CD8-positive, alpha-beta T cell (primary cell): ENCODE measurements at regions of chr15 and their contacts with region 1.

Region 1: GRCh38 chr15:38354315-38354929 is 99.5 kb upstream of the FAM98B start:
- DNase-seq: peak; percentile 15 to 73 (median 51)
- ATAC-seq: no peak
- H3K4me3 ChIP-seq: no peak overlapping the region
- H3K4me3 Mint-ChIP-seq: no peak overlapping the region
- H3K27ac ChIP-seq: no peak overlapping the region
- H3K27ac Mint-ChIP-seq: no peak overlapping the region
- H3K4me1 ChIP-seq: no peaks in the 10 kb centered on the region
- H3K4me1 Mint-ChIP-seq: no peaks in the 10 kb centered on the region
- H3K27me3 ChIP-seq: no peaks in the 10 kb centered on the region
- H3K27me3 Mint-ChIP-seq: peaks cover 5% of the 10 kb centered on the region
- CTCF ChIP-seq: peak; percentile 63

Region 2: DNA sequence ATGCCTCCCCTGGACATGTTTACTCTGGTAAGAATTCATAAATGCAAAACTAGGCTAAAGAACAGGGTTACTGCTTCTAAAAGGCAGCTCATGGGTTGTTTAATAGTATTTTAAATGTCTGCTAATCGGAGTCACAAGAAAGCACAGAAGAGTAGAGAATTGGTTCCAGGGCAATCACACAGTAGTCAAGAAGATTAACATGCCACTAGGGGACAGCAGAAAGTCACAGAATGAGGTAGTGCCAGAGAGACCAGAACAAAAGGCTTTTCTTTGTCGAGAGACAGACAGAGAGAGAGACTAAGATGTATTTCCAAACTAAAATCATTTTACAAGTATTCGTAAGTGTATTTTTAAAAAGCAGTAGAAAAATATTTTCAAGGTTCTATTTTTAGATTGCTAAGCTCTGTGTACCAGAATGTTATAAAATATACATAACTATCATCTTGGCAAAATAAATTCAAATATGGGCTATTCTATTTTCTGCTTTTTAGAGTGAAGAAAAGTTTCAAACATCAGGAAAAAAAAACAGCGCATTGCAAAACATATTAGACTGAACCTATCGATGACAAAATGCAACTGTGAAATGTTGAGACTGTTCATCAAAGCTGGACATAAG is 1853.3 kb before region 1 on chr15:
- CTCF ChIA-PET with region 1: interaction called, 3 read pairs
- POLR2A ChIA-PET with region 1: no interaction called
- intact Hi-C with region 1: loop called in 1 of 2 experiments (anchors 5 kb)
- DNase-seq: peak in 2 of 9 experiments; percentile 26 to 38
- ATAC-seq: no peak
- H3K4me3 ChIP-seq: no peak overlapping the region
- H3K4me3 Mint-ChIP-seq: no peak overlapping the region
- H3K27ac ChIP-seq: no peak overlapping the region
- H3K27ac Mint-ChIP-seq: no peak overlapping the region
- H3K4me1 ChIP-seq: no peaks in the 10 kb centered on the region
- H3K4me1 Mint-ChIP-seq: no peaks in the 10 kb centered on the region
- H3K27me3 ChIP-seq: no peaks in the 10 kb centered on the region
- H3K27me3 Mint-ChIP-seq: peaks cover 18% of the 10 kb centered on the region
- CTCF ChIP-seq: peak; percentile 49

Region 3: GRCh38 chr15:36883713-36884517 is 1470.5 kb before region 1 on chr15:
- CTCF ChIA-PET with region 1: no interaction called
- POLR2A ChIA-PET with region 1: no interaction called
- intact Hi-C with region 1: loop called in 1 of 2 experiments (anchors 10 kb)
- DNase-seq: peak in 8 of 9 experiments; percentile 15 to 56 (median 44)
- ATAC-seq: no peak
- H3K4me3 ChIP-seq: no peak overlapping the region
- H3K4me3 Mint-ChIP-seq: peak overlapping the region; percentile 29
- H3K27ac ChIP-seq: no peak overlapping the region
- H3K27ac Mint-ChIP-seq: no peak overlapping the region
- H3K4me1 ChIP-seq: no peaks in the 10 kb centered on the region
- H3K4me1 Mint-ChIP-seq: peaks cover 15% of the 10 kb centered on the region
- H3K27me3 ChIP-seq: peaks cover 35 to 57% of the 10 kb centered on the region in 2 experiments
- H3K27me3 Mint-ChIP-seq: peaks cover 87% of the 10 kb centered on the region
- CTCF ChIP-seq: no peak

Region 4: GRCh38 chr15:37764733-37765191 is 589.7 kb before region 1 on chr15:
- CTCF ChIA-PET with region 1: interaction called, 3 read pairs
- POLR2A ChIA-PET with region 1: no interaction called
- intact Hi-C with region 1: loop called in 1 of 2 experiments (anchors 2 kb)
- DNase-seq: peak in 3 of 9 experiments; percentile 6 to 37 (median 25)
- ATAC-seq: no peak
- H3K4me3 ChIP-seq: no peak overlapping the region
- H3K4me3 Mint-ChIP-seq: no peak overlapping the region
- H3K27ac ChIP-seq: no peak overlapping the region
- H3K27ac Mint-ChIP-seq: no peak overlapping the region
- H3K4me1 ChIP-seq: peaks cover 5% of the 10 kb centered on the region
- H3K4me1 Mint-ChIP-seq: peaks cover 15% of the 10 kb centered on the region
- H3K27me3 ChIP-seq: no peaks in the 10 kb centered on the region
- H3K27me3 Mint-ChIP-seq: no peaks in the 10 kb centered on the region
- CTCF ChIP-seq: peak; percentile 56

Region 5: DNA sequence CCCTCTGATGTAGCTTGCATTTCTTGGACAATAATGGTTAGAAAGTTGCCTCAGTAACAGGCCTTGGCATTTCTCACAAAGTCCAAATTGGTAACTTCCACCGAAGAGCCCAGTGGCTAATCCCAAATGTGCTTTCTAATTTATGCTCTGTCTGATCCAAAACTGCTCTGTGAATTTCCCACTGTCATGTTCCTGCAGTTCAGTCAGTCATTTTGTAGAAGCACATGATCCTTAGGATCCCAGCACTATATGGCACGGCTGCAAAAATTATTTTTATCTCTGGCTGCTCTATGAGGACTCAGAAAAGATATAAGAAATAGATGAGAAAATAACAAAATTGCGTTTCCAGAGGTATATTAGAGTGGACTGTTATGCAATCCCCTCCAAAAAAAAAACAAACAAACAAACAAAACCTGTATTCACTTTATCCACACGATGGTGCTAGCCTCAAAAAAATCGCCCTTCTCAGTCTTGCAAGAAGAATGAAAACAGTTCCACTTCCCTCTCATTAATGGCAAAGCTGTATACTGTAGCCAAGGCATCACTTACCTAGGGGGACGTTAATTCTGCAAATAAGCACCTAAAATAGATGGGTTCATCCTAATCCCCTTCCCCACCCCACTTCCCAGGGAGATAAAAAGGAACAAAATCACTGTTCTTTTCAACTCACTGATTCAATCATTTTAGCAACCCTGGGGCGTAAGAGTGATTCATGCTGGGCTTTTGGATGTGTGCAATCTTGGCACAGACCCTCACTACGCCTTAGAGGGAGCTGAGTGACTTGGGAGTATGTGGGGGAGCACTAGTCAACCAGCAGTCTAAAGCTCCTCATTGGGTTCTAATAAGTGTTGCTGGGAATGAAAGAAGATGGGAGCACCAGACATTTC is 358.7 kb before region 1 on chr15:
- CTCF ChIA-PET with region 1: interaction called, 6 read pairs
- POLR2A ChIA-PET with region 1: no interaction called
- intact Hi-C with region 1: loop called (anchors 2 to 5 kb)
- DNase-seq: peak in 2 of 9 experiments; percentile 29 to 40
- ATAC-seq: no peak
- H3K4me3 ChIP-seq: no peak overlapping the region
- H3K4me3 Mint-ChIP-seq: no peak overlapping the region
- H3K27ac ChIP-seq: no peak overlapping the region
- H3K27ac Mint-ChIP-seq: no peak overlapping the region
- H3K4me1 ChIP-seq: no peaks in the 10 kb centered on the region
- H3K4me1 Mint-ChIP-seq: no peaks in the 10 kb centered on the region
- H3K27me3 ChIP-seq: no peaks in the 10 kb centered on the region
- H3K27me3 Mint-ChIP-seq: peaks cover 9% of the 10 kb centered on the region
- CTCF ChIP-seq: no peak

Region 6: DNA sequence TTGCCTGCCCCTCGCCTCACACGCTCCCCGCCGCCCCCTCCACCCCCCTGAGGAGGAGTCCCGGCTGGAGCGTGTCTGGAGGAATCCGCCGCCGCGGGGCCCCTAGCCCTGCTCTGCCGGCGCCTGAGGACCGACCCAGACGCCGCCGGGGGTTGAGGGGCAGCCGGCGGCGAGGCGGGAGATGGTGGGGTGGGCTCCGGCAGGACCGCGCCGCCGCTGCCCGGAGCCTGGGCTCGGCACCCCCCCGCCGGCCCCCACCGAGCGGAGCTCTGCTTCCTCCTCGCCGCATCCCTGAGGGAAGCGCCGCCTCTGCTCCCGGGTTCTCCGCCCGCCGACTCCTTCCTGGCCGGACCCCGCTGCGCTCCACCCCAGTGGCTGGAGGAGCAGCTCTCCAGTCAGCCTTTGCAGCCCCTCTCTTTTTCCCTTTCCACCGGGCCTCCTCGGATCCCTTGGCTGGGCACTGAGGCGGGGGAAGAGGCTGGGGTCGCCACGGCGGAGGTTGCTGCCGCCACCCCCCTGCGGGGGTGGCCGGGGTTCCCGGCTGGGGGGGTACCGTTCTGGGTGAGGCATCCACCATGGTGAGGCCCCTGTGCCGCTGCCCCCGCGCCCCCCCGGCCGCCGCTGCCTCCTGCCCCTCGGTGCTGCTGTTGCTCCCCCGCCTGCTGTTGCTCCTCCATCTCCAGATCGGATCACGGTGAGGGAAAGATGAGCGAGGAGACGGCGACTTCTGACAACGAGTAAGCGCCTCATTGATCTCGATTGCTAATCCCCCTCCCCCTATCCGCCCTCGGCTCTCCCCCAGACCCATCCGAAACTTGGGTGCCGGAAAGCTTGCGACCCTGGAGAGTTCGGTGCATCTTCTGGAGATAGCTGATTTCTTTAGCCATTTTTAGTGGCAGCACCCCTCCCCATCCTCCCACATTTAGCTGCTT is 101.7 kb before region 1 on chr15 and contains the start of gene SPRED1:
- CTCF ChIA-PET with region 1: no interaction called
- POLR2A ChIA-PET with region 1: no interaction called
- intact Hi-C with region 1: loop called in 1 of 2 experiments (anchors 2 kb)
- DNase-seq: peak in 7 of 9 experiments; percentile 1 to 50 (median 32)
- ATAC-seq: peak; percentile 13
- H3K4me3 ChIP-seq: peak within 1 kb of the TSS; percentile 75 to 85
- H3K4me3 Mint-ChIP-seq: peak within 1 kb of the TSS; percentile 84
- H3K27ac ChIP-seq: no peak within 1 kb of the TSS
- H3K27ac Mint-ChIP-seq: no peak within 1 kb of the TSS
- H3K4me1 ChIP-seq: peaks cover 21% of the 10 kb centered on the region
- H3K4me1 Mint-ChIP-seq: peaks cover 26% of the 10 kb centered on the region
- H3K27me3 ChIP-seq: no peaks in the 10 kb centered on the region
- H3K27me3 Mint-ChIP-seq: peaks cover 10% of the 10 kb centered on the region
- CTCF ChIP-seq: no peak
- total RNA-seq, gene SPRED1: 0.05 to 0.50 TPM